Sigmoid colon (tissue), 7 donors: ENCODE measurements at regions of chr9 and their contacts with region 1.

Region 1: DNA sequence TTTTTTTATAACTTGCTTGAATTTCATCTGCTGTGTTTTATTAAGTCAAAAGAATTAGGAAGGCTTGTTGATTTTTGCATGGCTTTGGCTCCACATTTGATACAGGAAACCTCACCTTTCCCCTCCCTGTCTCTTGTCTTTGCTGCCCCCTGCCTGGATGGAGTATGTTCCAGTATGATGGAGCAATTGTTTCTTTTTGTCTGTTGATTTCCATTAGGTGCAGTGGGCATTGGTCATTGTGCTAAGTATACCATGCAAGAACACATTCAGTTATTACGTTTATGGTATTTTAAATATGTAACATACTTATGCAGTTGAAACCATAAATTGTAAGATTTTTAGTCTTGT is 19.6 kb downstream of the TJP2 start:
- DNase-seq: no peak
- H3K4me3 ChIP-seq: no peak overlapping the region
- H3K27ac ChIP-seq: no peak overlapping the region
- H3K4me1 ChIP-seq: peaks cover 0 to 4% (median 0%) of the 10 kb centered on the region in 4 donors
- H3K27me3 ChIP-seq: peaks cover 0 to 3% (median 0%) of the 10 kb centered on the region in 3 donors
- CTCF ChIP-seq: no peak
- EP300 ChIP-seq: no peak
- POLR2A ChIP-seq: no peak

Region 2: GRCh38 chr9:68619636-68620035 is 574.0 kb before region 1 on chr9:
- intact Hi-C with region 1: no loop called
- DNase-seq: no peak
- H3K4me3 ChIP-seq: no peak overlapping the region
- H3K27ac ChIP-seq: no peak overlapping the region
- H3K4me1 ChIP-seq: no peaks in the 10 kb centered on the region
- H3K27me3 ChIP-seq: no peaks in the 10 kb centered on the region
- CTCF ChIP-seq: no peak
- EP300 ChIP-seq: no peak
- POLR2A ChIP-seq: no peak

Region 3: DNA sequence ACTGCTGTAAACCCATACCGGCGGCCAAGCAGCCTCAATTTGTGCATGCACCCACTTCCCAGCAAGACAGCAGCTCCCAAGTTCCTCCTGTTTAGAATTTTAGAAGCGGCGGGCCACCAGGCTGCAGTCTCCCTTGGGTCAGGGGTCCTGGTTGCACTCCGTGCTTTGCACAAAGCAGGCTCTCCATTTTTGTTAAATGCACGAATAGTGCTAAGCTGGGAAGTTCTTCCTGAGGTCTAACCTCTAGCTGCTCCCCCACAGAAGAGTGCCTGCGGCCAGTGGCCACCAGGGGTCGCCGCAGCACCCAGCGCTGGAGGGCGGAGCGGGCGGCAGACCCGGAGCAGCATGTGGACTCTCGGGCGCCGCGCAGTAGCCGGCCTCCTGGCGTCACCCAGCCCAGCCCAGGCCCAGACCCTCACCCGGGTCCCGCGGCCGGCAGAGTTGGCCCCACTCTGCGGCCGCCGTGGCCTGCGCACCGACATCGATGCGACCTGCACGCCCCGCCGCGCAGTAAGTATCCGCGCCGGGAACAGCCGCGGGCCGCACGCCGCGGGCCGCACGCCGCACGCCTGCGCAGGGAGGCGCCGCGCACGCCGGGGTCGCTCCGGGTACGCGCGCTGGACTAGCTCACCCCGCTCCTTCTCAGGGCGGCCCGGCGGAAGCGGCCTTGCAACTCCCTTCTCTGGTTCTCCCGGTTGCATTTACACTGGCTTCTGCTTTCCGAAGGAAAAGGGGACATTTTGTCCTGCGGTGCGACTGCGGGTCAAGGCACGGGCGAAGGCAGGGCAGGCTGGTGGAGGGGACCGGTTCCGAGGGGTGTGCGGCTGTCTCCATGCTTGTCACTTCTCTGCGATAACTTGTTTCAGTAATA is 158.0 kb before region 1 on chr9 and contains the start of gene FXN:
- intact Hi-C with region 1: loop called (anchors 1 kb)
- DNase-seq: peak; percentile 90
- H3K4me3 ChIP-seq: peak within 1 kb of the TSS; percentile 43 to 68 (median 64)
- H3K27ac ChIP-seq: peak within 1 kb of the TSS; percentile 83 to 86 (median 85)
- H3K4me1 ChIP-seq: peaks cover 0 to 15% (median 12%) of the 10 kb centered on the region in 4 donors
- H3K27me3 ChIP-seq: no peaks in the 10 kb centered on the region
- CTCF ChIP-seq: peak; percentile 82 to 99 (median 90)
- EP300 ChIP-seq: no peak
- POLR2A ChIP-seq: no peak
- total RNA-seq, gene FXN: 3.4 to 8.7 (median 5.6) TPM

Region 4: DNA sequence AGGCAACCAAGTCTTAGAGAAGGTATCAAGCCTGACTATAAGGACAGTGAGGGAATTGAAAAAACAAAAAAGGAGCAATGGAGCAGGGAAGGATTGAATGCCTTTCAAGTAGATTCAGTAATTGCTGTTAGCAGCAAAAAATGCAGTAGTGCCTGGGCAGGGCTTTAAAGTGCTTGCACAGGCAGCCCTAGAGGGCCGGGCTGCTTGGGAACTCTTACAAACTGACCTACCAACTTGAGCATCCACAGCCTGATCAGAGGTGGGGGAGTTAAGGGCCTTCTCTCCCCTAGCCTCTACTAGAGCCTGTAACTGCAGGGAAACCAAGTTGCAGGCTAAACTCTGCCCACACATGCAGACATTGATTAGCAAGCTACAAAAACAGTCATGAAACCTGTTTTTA is 138.7 kb before region 1 on chr9:
- intact Hi-C with region 1: loop called (anchors 2 kb)
- DNase-seq: no peak
- H3K4me3 ChIP-seq: no peak overlapping the region
- H3K27ac ChIP-seq: no peak overlapping the region
- H3K4me1 ChIP-seq: no peaks in the 10 kb centered on the region
- H3K27me3 ChIP-seq: no peaks in the 10 kb centered on the region
- CTCF ChIP-seq: no peak
- EP300 ChIP-seq: no peak
- POLR2A ChIP-seq: no peak

Region 5: DNA sequence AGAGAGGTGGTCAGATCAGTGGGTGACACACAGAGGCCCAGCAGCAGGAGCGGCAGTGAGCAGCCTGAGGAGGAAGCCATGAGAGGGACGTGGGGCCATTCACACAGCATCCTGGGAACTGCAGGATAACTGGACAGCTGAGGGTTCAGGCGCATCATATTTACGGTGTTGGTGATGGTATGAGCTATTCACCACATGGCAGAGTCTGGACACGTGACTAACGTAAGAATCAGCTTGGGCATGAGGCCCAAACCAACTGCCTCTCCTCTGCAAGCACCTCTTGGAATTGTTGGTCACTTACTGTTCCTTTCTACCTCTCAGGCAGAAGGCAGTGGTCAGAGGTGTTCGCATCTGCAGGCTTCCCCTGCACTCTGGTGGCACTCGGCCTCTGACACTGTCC is 272.5 kb after region 1 on chr9:
- intact Hi-C with region 1: no loop called
- DNase-seq: no peak
- H3K4me3 ChIP-seq: no peak overlapping the region
- H3K27ac ChIP-seq: peak overlapping the region in 1 of 4 donors; percentile 54
- H3K4me1 ChIP-seq: peaks cover 0 to 15% (median 3%) of the 10 kb centered on the region in 4 donors
- H3K27me3 ChIP-seq: no peaks in the 10 kb centered on the region
- CTCF ChIP-seq: no peak
- EP300 ChIP-seq: no peak
- POLR2A ChIP-seq: no peak